ENCODE measurements at regions of chr1 and their contacts with region 1.

Region 1: GRCh38 chr1:234722904-234723720 is 113.1 kb upstream of the IRF2BP2 start:
- DNase-seq: peak; percentile 99
- H3K4me3 Mint-ChIP-seq: peak overlapping the region; percentile 61
- H3K27ac Mint-ChIP-seq: peak overlapping the region; percentile 96
- H3K4me1 Mint-ChIP-seq: peaks cover 77% of the 10 kb centered on the region
- H3K27me3 Mint-ChIP-seq: no peaks in the 10 kb centered on the region
- CTCF ChIP-seq: no peak

Region 2: GRCh38 chr1:234533975-234534876 is 188.9 kb before region 1 on chr1:
- CTCF ChIA-PET with region 1: interaction called, 3 read pairs
- POLR2A ChIA-PET with region 1: interaction called, 30 read pairs
- intact Hi-C with region 1: no loop called
- DNase-seq: peak; percentile 100
- H3K4me3 Mint-ChIP-seq: peak overlapping the region; percentile 31
- H3K27ac Mint-ChIP-seq: peak overlapping the region; percentile 93
- H3K4me1 Mint-ChIP-seq: peaks cover 43% of the 10 kb centered on the region
- H3K27me3 Mint-ChIP-seq: no peaks in the 10 kb centered on the region
- CTCF ChIP-seq: no peak

Region 3: DNA sequence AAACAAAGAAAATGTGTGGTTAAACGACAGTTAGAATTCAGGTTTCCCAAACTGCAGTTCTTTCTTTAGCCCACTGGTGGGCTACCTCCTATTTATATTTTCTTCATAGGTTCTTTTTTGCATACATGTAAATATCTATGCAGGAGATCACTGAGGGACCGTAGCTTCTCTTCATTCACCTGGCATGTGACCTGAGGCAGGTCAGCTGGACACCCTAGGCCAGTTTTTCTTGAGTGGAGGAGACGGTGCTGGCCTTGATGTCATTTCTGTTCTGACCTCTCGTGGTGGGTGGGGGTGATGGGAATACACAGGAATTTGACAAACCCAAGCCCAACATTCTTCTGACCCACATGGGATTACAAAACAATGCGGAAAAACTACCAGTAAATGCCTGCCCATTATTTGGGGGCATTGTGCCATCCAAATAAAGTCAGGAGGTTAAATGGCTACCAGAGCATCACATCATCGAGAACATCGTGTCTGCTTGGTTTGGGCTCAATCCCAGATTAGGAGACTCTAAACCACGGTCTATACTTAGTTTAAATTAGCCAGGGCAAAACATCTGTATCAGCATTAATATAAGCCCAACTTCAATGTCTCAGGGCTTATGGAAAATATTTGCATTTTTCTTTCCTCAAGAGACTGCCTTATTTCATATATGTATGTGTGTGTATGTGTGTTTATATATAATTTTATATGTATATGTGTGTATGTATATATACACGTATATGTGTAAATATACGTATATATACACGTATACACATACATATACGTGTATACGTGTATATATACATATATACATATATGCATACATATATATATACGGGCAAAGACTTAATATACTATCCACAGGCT is 105.8 kb before region 1 on chr1:
- CTCF ChIA-PET with region 1: interaction called, 76 read pairs
- POLR2A ChIA-PET with region 1: interaction called, 563 read pairs
- intact Hi-C with region 1: loop called (anchors 1 kb)
- DNase-seq: peak; percentile 80
- H3K4me3 Mint-ChIP-seq: no peak overlapping the region
- H3K27ac Mint-ChIP-seq: peak overlapping the region; percentile 99
- H3K4me1 Mint-ChIP-seq: peaks cover 70% of the 10 kb centered on the region
- H3K27me3 Mint-ChIP-seq: no peaks in the 10 kb centered on the region
- CTCF ChIP-seq: peak; percentile 28

Region 4: GRCh38 chr1:234683861-234684632 is 39.1 kb before region 1 on chr1:
- CTCF ChIA-PET with region 1: interaction called, 7 read pairs
- POLR2A ChIA-PET with region 1: interaction called, 24 read pairs
- intact Hi-C with region 1: loop called (anchors 1 kb)
- DNase-seq: peak; percentile 100
- H3K4me3 Mint-ChIP-seq: no peak overlapping the region
- H3K27ac Mint-ChIP-seq: peak overlapping the region; percentile 27
- H3K4me1 Mint-ChIP-seq: peaks cover 10% of the 10 kb centered on the region
- H3K27me3 Mint-ChIP-seq: no peaks in the 10 kb centered on the region
- CTCF ChIP-seq: no peak

Region 5: DNA sequence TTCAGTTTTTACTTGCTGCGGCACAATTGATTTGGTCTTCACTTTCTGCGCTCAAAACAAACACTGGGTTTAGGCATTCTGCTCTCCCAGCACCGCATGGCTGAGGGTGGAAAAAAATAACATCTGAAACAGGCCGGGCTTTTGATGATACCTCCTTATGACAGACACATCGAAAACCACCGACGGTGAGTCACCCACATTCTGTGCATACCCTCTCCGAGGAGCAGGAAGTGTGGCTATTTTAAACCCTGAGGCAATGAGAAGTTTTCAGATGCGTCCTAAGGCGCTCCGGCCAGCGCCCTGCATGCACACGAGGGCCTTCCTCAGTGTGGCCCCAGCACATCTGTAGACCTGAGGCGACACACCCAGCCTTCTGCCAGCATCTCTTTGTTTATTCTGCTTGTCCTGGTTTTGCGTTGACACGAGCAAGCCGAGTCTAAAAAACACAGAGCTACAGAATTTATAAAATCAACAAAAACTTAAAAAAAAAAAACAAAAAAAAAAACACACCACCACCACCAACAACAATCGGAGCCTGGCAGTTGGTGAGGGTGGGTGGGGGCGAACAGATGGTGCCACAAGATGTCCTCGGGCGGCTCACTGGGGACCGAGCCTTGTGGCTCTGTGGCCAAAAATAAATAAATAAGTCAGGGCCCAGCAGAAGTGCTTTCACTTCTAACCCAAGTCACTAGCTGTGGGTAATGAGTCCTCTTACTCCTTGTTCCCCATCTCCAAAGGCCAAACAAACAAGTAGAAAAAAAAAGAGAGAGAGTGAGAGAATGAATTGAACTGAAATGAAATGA is 49.4 kb after region 1 on chr1:
- CTCF ChIA-PET with region 1: interaction called, 11 read pairs
- POLR2A ChIA-PET with region 1: interaction called, 11 read pairs
- intact Hi-C with region 1: loop called (anchors 1 kb)
- DNase-seq: peak; percentile 100
- H3K4me3 Mint-ChIP-seq: peak overlapping the region; percentile 51
- H3K27ac Mint-ChIP-seq: peak overlapping the region; percentile 95
- H3K4me1 Mint-ChIP-seq: peaks cover 29% of the 10 kb centered on the region
- H3K27me3 Mint-ChIP-seq: no peaks in the 10 kb centered on the region
- CTCF ChIP-seq: no peak

Region 6: GRCh38 chr1:234997201-234997895 is 274.2 kb after region 1 on chr1:
- CTCF ChIA-PET with region 1: interaction called, 4 read pairs
- POLR2A ChIA-PET with region 1: interaction called, 83 read pairs
- intact Hi-C with region 1: loop called (anchors 1 kb)
- DNase-seq: peak; percentile 100
- H3K4me3 Mint-ChIP-seq: peak overlapping the region; percentile 58
- H3K27ac Mint-ChIP-seq: peak overlapping the region; percentile 93
- H3K4me1 Mint-ChIP-seq: peaks cover 26% of the 10 kb centered on the region
- H3K27me3 Mint-ChIP-seq: no peaks in the 10 kb centered on the region
- CTCF ChIP-seq: no peak

Region 7: GRCh38 chr1:235067263-235068172 is 344.4 kb after region 1 on chr1:
- CTCF ChIA-PET with region 1: interaction called, 9 read pairs
- POLR2A ChIA-PET with region 1: interaction called, 156 read pairs
- intact Hi-C with region 1: no loop called
- DNase-seq: peak; percentile 100
- H3K4me3 Mint-ChIP-seq: peak overlapping the region; percentile 54
- H3K27ac Mint-ChIP-seq: peak overlapping the region; percentile 97
- H3K4me1 Mint-ChIP-seq: peaks cover 53% of the 10 kb centered on the region
- H3K27me3 Mint-ChIP-seq: no peaks in the 10 kb centered on the region
- CTCF ChIP-seq: no peak